ENCODE measurements at regions of chr2 and their contacts with region 1.

Region 1: DNA sequence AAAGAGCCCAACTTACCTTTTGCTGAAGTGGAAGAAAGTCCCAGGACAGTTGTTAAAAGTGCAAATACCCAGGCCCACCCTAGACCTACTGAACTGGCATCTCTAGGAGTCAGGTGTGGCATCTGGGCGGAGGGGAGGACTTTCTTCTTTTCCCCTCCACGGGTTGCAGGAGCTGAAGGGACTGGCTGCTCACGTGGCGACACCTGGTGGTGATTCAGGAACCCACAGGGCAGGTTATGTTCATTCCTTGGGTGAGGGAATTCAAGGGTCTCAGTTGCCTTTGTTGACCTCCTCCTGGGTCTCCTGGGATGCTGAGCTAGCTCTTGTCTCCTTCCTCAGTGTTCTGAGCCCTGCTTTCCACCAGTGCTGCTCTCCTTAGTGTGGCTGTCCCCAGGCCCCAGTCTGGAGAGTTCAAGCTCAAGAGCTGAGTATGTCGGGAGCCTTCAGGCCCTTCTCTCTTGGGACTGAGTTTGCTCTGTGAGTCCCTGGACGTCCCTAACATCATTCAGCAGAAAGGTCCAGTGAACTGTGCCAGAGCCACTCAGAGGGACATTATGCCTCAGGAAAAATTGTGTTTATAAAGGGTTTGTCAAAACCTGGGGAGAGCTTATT is 56.9 kb downstream of the DYSF start:
- DNase-seq: peak in 5 of 6 donors; percentile 41 to 85 (median 66)
- ATAC-seq: peak; percentile 77 to 88 (median 83)
- H3K4me3 ChIP-seq: no peak overlapping the region
- H3K27ac ChIP-seq: no peak overlapping the region
- H3K4me1 ChIP-seq: no peaks in the 10 kb centered on the region
- H3K27me3 ChIP-seq: peaks cover 0 to 4% (median 0%) of the 10 kb centered on the region in 4 donors
- CTCF ChIP-seq: peak; percentile 71 to 90 (median 83)

Region 2: DNA sequence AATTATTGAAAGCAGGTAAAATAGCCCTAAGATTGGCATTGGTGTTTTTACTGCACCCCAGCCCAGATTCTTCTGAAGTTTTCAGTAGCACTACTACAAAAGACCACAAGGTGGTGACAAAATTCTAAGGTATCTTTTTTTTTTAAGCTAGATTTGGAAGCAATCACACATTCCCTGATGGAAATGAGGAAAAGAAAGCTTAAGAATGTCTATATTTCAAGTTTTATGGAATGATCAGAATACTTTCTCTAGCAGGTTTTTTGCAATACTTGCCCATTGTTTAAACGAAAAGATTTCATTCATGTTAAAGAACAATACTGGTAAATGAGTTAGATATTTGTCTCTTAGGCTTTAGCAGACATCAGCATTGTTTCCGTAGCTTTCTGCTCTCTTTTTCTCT is 210.8 kb before region 1 on chr2:
- intact Hi-C with region 1: loop called (anchors 2 to 10 kb)
- DNase-seq: no peak
- ATAC-seq: peak in 3 of 4 donors; percentile 56 to 71 (median 61)
- H3K4me3 ChIP-seq: no peak overlapping the region
- H3K27ac ChIP-seq: no peak overlapping the region
- H3K4me1 ChIP-seq: no peaks in the 10 kb centered on the region
- H3K27me3 ChIP-seq: no peaks in the 10 kb centered on the region
- CTCF ChIP-seq: peak; percentile 47 to 65 (median 60)

Region 3: GRCh38 chr2:71614976-71615766 is 104.9 kb after region 1 on chr2:
- intact Hi-C with region 1: no loop called
- DNase-seq: peak in 4 of 6 donors; percentile 23 to 60 (median 24)
- ATAC-seq: peak; percentile 31 to 79 (median 60)
- H3K4me3 ChIP-seq: no peak overlapping the region
- H3K27ac ChIP-seq: no peak overlapping the region
- H3K4me1 ChIP-seq: peaks cover 0 to 4% (median 0%) of the 10 kb centered on the region in 3 donors
- H3K27me3 ChIP-seq: no peaks in the 10 kb centered on the region
- CTCF ChIP-seq: no peak

Region 4: DNA sequence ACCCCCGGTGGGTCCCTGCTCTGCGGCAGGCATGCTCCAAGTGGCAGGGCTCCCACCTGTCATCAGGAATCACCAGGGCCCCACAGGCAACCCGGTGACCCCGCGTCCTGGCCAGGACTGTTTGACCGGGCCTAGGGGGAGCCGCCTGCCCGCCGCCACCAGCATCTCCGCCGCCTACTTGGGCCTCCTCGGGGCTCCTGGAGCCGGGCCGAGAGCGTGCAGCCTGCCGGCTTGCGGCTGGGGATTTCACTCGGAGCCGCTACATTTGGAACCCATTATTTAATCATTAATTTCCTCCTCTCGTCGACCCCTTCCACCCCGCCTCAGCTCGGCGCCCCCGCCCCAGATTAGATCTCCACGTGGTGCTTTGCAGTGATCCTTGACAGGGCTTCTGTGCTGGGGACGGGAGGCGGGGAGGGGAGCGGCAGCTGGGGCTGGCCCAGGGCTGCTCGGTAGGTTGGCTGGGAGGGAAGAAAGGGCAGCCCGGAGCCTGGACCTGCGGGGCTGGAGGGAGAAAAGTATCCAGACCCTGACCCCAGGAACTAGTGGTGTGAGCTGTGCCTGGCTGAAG is 341.9 kb after region 1 on chr2:
- intact Hi-C with region 1: no loop called
- DNase-seq: no peak
- ATAC-seq: peak in 1 of 4 donors; percentile 43
- H3K4me3 ChIP-seq: no peak overlapping the region
- H3K27ac ChIP-seq: no peak overlapping the region
- H3K4me1 ChIP-seq: no peaks in the 10 kb centered on the region
- H3K27me3 ChIP-seq: no peaks in the 10 kb centered on the region
- CTCF ChIP-seq: no peak